ENCODE measurements at regions of chr17 and their contacts with region 1.

Region 1: DNA sequence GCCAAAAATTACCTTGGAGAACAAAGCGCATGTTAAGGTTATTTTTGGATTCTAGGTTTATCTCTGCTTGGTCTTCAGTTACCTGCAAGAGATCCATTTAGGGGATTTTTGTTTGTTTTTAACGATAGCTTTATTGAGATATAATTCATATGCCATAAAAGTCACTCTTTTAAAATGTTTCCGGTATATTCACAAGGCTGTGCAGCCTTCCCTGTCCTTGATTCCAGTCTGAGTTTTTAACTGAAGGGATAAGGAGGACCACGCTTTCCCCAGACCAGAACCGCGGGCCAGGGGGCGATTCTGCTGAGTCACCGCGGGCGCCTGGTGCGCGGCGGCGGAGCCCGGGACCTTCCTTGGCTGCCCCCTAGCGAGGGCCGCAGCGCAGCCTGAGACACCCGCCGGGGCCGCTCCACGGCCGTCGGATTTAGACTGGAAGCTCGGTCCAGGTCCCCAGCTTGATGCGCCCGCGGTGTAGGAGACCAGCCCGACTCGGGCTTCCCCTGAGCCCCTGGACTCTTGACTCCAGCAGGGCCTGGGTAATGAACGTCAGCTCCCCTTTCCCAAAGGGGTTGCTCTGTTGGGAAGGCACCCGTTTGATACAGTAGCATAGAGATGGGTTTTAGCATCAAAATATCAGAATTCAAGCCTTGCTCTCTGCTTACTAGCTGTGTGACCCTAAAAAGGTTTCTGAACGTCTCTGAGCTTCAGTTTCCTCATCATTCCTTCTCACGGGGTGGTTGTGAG is 50.0 kb upstream of the STH start:
- DNase-seq: peak; percentile 67
- ATAC-seq: peak; percentile 98
- H3K4me3 Mint-ChIP-seq: peak overlapping the region; percentile 40
- H3K27ac Mint-ChIP-seq: no peak overlapping the region
- H3K4me1 Mint-ChIP-seq: peaks cover 6% of the 10 kb centered on the region
- H3K27me3 Mint-ChIP-seq: peaks cover 37% of the 10 kb centered on the region

Region 2: DNA sequence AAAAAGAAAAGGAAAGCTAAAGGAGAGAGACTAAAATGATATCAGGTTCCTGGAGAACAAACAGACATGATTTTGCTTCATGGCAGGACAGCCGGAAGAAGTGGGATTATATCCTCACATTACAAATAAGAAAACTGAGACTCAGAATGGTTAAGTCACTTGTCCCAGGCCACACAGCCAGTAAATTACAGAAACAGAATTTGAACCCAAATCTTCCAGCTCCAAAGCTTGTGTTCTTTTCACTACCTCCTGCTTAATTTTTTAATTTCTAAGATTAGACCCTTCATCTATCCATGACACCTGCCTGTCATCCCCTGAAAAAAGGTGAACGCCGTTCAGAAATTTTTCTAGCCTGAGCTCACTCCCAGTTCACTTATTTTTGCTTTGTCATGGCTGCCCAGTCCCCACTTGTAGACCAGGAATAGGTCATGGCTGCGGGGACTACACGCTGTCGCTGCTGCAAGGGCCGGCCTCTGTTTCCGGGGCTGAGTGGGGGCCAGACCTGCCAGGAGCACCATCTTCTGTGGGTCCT is 18.6 kb before region 1 on chr17:
- CTCF ChIA-PET with region 1: interaction called, 10 read pairs
- POLR2A ChIA-PET with region 1: no interaction called
- DNase-seq: no peak
- ATAC-seq: no peak
- H3K4me3 Mint-ChIP-seq: no peak overlapping the region
- H3K27ac Mint-ChIP-seq: no peak overlapping the region
- H3K4me1 Mint-ChIP-seq: no peaks in the 10 kb centered on the region
- H3K27me3 Mint-ChIP-seq: peaks cover 6% of the 10 kb centered on the region

Measured in activated CD8-positive, alpha-beta T cell treated with anti-CD3 and anti-CD28 coated beads, Interleukin-2, amount 10 ng/mL, durations not matched to agents 7 days and 5 days (primary cell).